ENCODE measurements at regions of chr5 and their contacts with region 1.

Region 1: DNA sequence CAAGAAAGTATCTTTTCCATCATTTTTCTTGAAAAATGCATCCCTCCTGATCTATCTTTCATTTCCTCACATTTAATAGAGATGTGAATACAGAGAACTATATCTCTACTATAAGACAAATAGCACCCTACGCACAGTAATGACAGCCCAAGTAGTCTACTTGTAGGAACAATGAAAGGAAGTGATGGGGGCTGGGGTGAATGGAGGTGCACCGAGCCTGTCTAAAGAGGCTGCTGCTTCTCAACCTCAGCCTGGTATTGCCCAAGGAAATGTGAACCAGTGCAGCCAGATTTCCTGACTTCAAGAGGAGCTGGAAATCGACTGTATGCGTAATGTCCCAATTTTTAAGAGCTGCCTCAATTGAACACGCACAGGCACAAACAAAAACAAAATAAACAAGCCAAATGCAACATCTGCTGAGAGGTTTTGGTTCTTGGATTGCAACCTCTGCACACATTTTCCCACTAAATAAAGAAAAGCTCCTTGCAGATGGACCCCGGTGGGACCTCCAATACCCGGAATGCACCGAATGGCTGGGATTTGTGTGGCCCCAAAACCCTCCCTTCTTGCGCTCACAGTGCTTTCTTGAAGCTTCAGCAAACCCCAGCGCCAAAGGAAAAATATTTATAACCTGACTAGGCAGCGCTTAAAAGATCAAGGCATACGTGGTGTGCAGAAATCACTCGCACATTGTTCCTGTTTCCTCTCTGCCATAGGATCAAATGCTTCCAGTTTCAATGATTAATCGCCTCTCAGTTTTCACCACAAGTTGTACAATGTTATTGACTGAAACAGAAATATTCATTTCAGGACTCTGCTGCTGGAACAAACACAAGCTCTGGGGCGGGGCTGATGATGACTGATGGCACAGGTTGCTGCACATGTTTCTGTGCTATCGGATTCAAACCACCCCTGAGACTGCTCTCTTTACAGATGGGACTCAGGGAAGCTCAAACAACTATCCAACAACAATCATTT is 68.3 kb downstream of the KCNIP1 start:
- DNase-seq: peak; percentile 94
- H3K4me3 Mint-ChIP-seq: no peak overlapping the region
- H3K27ac Mint-ChIP-seq: no peak overlapping the region
- H3K4me1 Mint-ChIP-seq: peaks cover 20% of the 10 kb centered on the region
- H3K27me3 Mint-ChIP-seq: peaks cover 63% of the 10 kb centered on the region

Region 2: DNA sequence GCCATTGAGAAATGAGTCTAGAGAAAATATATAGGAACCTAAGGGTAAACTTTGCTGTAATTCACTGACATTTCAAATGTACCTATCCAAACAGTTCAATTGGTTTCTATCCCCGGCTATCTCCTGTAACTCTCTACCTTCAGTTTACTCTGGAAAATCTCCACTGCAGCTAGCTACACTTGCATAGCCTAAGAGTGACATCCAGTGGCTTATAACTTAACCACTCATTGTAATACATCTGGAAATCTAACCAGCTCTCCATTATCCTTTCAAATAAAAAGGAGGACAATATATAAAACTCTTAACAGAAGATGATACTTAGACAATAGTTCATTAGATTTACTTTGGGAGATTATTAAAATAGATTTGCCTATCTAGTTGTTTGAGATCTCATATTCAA is 1023.8 kb before region 1 on chr5:
- CTCF ChIA-PET with region 1: no interaction called
- intact Hi-C with region 1: loop called (anchors 5 kb)
- DNase-seq: no peak
- H3K4me3 Mint-ChIP-seq: no peak overlapping the region
- H3K27ac Mint-ChIP-seq: no peak overlapping the region
- H3K4me1 Mint-ChIP-seq: peaks cover 9% of the 10 kb centered on the region
- H3K27me3 Mint-ChIP-seq: peaks cover 59% of the 10 kb centered on the region

Region 3: GRCh38 chr5:169701910-169702451 is 870.2 kb before region 1 on chr5:
- CTCF ChIA-PET with region 1: no interaction called
- intact Hi-C with region 1: loop called (anchors 5 kb)
- DNase-seq: no peak
- H3K4me3 Mint-ChIP-seq: no peak overlapping the region
- H3K27ac Mint-ChIP-seq: peak overlapping the region; percentile 59
- H3K4me1 Mint-ChIP-seq: peaks cover 41% of the 10 kb centered on the region
- H3K27me3 Mint-ChIP-seq: no peaks in the 10 kb centered on the region

Region 4: GRCh38 chr5:170253844-170254455 is 318.2 kb before region 1 on chr5:
- CTCF ChIA-PET with region 1: no interaction called
- intact Hi-C with region 1: loop called (anchors 1 kb)
- DNase-seq: peak; percentile 86
- H3K4me3 Mint-ChIP-seq: no peak overlapping the region
- H3K27ac Mint-ChIP-seq: peak overlapping the region; percentile 83
- H3K4me1 Mint-ChIP-seq: peaks cover 62% of the 10 kb centered on the region
- H3K27me3 Mint-ChIP-seq: no peaks in the 10 kb centered on the region

Region 5: DNA sequence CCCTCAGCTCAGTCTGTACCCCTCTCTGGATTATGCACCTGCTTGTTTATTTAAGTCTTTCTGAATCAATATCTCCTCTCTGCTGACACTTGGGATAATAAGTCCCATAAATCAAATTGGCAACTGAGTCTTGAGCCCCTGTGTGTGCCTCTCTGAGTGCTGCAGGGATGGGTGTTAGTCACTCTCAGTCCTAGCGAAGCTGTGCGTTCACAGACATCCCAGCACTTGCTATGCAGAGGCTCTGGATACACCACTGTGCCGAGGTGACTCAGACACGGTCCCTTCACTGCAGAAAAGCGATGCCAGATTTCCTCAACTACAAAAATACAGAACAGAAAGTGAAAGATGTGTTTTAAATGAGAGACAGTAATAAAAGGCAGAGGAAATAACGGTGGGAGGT is 178.9 kb before region 1 on chr5:
- CTCF ChIA-PET with region 1: no interaction called
- intact Hi-C with region 1: loop called (anchors 1 kb)
- DNase-seq: peak; percentile 80
- H3K4me3 Mint-ChIP-seq: peak overlapping the region; percentile 3
- H3K27ac Mint-ChIP-seq: peak overlapping the region; percentile 3
- H3K4me1 Mint-ChIP-seq: peaks cover 26% of the 10 kb centered on the region
- H3K27me3 Mint-ChIP-seq: no peaks in the 10 kb centered on the region

Region 6: DNA sequence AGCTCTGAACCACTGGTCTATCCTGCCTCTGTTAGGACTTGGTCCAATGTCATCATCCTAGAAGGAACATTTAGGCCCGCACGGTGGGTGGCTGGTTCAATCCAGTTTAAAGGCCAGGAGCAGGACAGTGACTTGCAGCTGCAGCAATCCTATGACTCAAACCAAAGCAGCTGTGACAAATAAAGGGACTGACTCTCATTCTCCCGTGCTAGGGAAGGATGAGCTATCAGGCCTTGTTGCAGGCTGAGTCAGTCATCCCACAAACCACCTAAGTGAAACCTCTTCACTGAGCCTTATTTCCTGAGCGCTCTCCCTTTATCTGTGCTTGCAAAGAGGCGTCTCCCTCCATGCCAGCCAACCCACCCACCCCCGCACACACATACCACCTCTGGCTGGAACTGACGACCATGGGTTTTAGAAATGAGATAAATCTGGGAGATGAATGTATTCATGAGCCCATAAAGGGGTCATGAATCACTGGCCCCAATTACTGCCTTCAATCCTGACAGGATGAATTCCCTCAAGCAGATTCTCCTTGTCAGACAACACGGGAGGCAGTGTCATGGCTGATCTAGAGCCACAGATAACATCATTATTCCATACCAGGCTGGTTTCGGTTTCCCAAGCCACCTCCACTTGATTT is 25.1 kb after region 1 on chr5:
- CTCF ChIA-PET with region 1: interaction called, 8 read pairs
- intact Hi-C with region 1: loop called (anchors 1 kb)
- DNase-seq: peak; percentile 61
- H3K4me3 Mint-ChIP-seq: no peak overlapping the region
- H3K27ac Mint-ChIP-seq: no peak overlapping the region
- H3K4me1 Mint-ChIP-seq: peaks cover 21% of the 10 kb centered on the region
- H3K27me3 Mint-ChIP-seq: peaks cover 30% of the 10 kb centered on the region

Measured in activated naive CD4-positive, alpha-beta T cell treated with anti-CD3 and anti-CD28 coated beads for 36 hours (primary cell).